ENCODE measurements at regions of chr4 and their contacts with region 1.

Region 1: GRCh38 chr4:147094237-147094636 is 148.6 kb upstream of the TTC29 start:
- DNase-seq: no peak
- ATAC-seq: no peak

Region 2: DNA sequence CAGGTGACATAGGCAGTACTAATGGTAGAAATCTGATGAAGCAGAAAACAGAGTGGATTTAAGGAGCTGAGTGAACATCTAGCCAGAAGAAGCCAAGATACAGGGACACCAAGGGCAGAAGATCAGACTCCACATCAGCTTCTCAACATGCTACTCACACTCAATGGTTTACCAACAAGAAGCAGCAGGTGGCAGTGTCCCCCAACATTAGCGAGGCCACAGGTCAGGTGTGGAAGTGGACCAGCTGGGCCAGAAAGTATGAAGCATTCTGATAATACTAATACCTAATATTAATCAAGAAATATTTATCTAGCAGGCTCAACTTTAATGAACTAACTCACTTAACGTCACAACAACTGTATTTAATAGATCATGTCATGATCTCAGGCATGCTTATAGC is 75.2 kb before region 1 on chr4:
- intact Hi-C with region 1: loop called (anchors 5 kb)
- DNase-seq: peak; percentile 78
- ATAC-seq: peak; percentile 84